ENCODE measurements at regions of chr3 and their contacts with region 1.

Region 1: GRCh38 chr3:122427857-122428471 is 12.1 kb upstream of the WDR5B start:
- DNase-seq: no peak
- ATAC-seq: peak; percentile 93
- H3K4me3 Mint-ChIP-seq: no peak overlapping the region
- H3K27ac Mint-ChIP-seq: peak overlapping the region; percentile 70
- H3K4me1 Mint-ChIP-seq: peaks cover 18% of the 10 kb centered on the region
- H3K27me3 Mint-ChIP-seq: no peaks in the 10 kb centered on the region

Region 2: DNA sequence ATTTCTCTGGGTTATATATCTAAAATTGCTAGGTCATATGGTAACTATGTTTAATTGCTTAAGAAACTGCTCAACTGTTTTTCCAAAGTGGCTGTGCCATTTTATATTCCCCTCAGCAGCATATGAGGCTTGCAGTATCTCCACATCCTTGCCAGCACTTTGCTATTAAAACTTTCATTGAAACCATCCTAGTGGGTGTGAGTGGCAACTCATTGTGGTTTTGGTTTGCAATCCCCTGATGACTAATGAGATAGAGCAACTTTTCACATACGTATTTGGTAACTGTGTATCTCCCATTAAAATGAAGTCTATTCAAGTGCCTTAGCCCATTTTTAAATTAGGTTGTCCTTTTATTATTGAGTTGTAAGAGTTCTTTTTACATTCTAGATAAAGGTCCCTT is 69.5 kb after region 1 on chr3:
- CTCF ChIA-PET with region 1: interaction called, 3 read pairs
- POLR2A ChIA-PET with region 1: no interaction called
- intact Hi-C with region 1: loop called in 1 of 2 experiments (anchors 5 kb)
- DNase-seq: peak; percentile 58
- ATAC-seq: peak; percentile 98
- H3K4me3 Mint-ChIP-seq: no peak overlapping the region
- H3K27ac Mint-ChIP-seq: no peak overlapping the region
- H3K4me1 Mint-ChIP-seq: peaks cover 50% of the 10 kb centered on the region
- H3K27me3 Mint-ChIP-seq: peaks cover 2% of the 10 kb centered on the region

Measured in activated CD4-positive, alpha-beta T cell treated with anti-CD3 and anti-CD28 coated beads for 36 hours (primary cell).